Activated T-helper 1 cell treated with anti-CD3 and anti-CD28 coated beads, Interleukin-12 subunit alpha, Interleukin-12 subunit beta, Interleukin-2, Interleukin-4 antibody, amounts not matched to agents 30 ng/mL and 10 ng/mL and 1 ng/mL, durations not matched to agents 14 hours and 24 hours and 36 hours (primary cell): ENCODE measurements at regions of chr16 and their contacts with region 1.

Region 1: DNA sequence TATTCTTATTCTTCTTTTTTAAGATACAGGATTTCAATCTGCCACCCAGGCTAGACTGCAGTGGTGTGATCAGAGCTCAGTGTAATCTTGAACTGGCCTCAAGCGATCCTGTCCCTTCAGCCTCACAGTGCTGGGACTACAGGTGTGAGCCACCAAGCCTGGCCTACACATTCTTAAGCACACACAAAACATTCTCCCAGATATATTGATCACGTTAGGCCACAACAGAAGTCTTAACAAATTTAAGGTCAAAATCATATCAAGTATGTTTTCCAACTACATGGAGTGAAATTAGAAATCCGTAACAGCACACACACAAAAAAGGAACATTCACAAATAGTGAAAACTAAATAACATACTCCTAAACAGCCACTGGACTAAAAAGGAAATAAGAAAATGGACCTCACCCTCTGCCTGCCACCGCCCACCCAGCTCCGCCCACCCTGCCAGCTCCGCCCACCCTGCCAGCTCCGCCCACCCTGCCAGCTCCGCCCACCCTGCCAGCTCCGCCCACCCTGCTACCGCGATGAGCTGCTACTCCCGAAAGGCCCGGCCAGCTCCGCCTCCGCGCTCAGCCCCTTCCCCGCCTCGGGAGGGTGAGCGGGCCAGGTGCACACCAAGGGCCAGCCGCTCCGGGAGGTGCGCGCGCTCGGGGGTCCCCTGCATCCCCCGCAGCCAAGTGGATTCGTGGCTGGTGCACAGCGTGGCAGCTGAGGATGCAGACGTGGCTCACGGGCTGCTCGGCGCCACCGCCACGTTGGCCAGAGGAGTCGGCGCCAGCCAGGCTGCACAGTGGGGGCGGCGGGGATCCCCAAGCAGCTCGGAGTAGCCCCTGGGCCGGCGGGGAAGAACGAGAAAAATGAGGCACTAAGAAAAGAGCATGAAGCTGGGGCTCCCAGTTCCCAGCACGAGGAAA is 41.2 kb downstream of the C16orf87 start:
- DNase-seq: peak; percentile 79
- H3K4me3 Mint-ChIP-seq: peak overlapping the region; percentile 61
- H3K27ac Mint-ChIP-seq: peak overlapping the region; percentile 59
- H3K4me1 Mint-ChIP-seq: peaks cover 22% of the 10 kb centered on the region
- H3K27me3 Mint-ChIP-seq: peaks cover 4% of the 10 kb centered on the region

Region 2: DNA sequence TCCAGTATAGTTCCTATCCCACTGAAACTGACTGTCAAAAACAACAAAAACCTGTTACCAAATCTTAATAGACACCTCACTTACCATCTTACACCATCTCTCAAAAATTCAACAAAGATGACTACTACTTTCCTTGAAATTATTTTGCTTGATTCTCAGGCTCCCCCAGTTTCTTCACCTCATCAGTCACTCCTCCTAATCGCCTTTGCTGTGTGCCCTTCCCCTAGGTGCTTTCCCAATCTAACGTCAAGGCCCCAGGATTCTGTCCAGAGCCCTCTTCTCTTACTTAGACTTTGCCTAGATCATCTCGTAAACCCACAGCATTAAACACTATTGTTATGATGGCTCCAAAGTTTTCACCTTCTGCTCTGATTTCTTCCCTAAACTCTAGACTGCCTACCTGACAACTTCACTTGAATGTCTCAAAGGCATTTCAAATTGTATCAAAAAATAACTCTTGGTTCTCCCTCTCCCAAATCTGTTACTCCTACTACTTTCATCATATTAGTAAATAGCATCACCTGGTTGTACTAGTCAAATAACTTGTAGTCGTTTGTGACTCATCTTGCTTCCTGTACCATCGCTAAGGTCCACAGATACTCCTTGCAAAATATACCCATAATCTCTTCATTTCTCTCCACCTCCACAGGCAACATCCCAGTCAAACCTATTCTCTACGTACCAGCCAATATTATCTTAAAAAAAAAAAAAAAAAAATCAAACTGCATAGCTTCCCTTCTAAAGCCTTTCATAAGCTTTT is 23.2 kb after region 1 on chr16:
- intact Hi-C with region 1: loop called (anchors 2 kb)
- DNase-seq: no peak
- H3K4me3 Mint-ChIP-seq: peak overlapping the region; percentile 6
- H3K27ac Mint-ChIP-seq: peak overlapping the region; percentile 86
- H3K4me1 Mint-ChIP-seq: peaks cover 48% of the 10 kb centered on the region
- H3K27me3 Mint-ChIP-seq: no peaks in the 10 kb centered on the region